Activated CD4-positive, alpha-beta T cell treated with anti-CD3 and anti-CD28 coated beads for 36 hours (primary cell): ENCODE measurements at regions of chr4 and their contacts with region 1.

Region 1: DNA sequence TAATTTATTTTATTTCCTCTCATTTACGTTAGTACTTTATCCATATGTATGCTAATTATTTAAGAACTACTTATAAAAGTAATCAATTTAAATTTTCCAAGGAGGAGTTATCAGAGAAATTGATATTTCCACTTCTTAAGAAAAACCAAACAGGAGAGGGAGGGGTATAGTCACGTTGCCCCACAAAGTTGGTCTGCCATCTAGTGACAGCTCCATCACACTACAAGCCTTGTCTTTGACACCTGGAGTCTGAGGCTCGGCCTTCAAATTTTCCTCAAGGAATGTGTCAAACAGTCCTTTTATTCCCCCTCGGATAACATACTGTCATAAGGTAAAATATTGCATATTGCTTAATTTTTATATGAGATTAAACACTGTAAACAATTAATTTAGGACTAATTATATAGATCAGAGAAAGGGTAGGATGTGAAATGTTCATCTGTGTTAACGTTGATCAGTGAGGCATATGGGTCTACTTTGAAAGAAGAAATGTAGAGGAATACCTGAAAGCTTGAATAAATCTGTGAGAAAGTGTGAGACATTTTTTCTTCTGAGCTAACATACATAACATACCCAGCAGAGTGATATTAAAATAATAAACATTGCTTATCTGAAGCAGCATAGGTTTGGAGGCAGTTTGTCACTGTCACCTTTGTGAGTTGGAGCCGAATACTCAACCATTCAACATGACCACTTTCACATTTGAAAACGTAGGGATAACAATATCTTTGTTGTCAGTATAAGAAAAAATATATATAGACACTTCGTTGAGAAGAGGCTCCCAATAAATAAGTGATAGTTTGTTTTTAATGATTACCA is 114.4 kb downstream of the GLRA3 start:
- DNase-seq: peak; percentile 38
- ATAC-seq: no peak
- H3K4me3 Mint-ChIP-seq: no peak overlapping the region
- H3K27ac Mint-ChIP-seq: no peak overlapping the region
- H3K4me1 Mint-ChIP-seq: no peaks in the 10 kb centered on the region
- H3K27me3 Mint-ChIP-seq: peaks cover 7% of the 10 kb centered on the region

Region 2: DNA sequence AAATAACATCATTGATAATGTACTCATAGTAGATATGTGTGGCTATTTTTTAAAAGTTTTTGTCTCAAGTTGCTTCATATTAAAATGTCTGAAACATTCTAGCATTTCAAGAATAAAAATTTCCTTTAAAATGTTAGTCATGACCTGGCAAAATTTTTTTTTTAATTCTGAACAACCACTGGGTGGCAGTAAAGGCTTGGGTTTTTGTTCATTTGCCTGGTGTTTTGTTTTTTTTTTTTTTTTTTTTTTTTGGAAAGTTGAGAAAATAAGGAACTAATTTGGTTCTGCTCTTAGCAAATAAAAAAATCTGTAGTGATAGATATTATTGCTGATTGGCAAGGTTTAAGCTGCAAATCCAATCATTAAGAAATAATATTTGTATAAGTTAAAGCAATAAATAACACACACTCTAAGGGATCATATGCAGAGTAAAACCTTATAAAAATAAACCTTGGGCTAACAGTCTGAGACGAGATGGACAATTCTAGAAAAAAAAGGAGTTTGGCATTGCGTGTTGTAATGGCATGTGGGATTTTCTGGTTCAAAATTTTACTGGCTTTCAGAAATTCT is 349.5 kb before region 1 on chr4:
- CTCF ChIA-PET with region 1: interaction called, 3 read pairs
- POLR2A ChIA-PET with region 1: no interaction called
- intact Hi-C with region 1: loop called (anchors 1 to 2 kb)
- DNase-seq: peak; percentile 11
- ATAC-seq: no peak
- H3K4me3 Mint-ChIP-seq: no peak overlapping the region
- H3K27ac Mint-ChIP-seq: no peak overlapping the region
- H3K4me1 Mint-ChIP-seq: no peaks in the 10 kb centered on the region
- H3K27me3 Mint-ChIP-seq: peaks cover 9% of the 10 kb centered on the region

Region 3: GRCh38 chr4:174749091-174749490 is 34.5 kb after region 1 on chr4:
- CTCF ChIA-PET with region 1: no interaction called
- POLR2A ChIA-PET with region 1: no interaction called
- intact Hi-C with region 1: no loop called
- DNase-seq: no peak
- ATAC-seq: no peak
- H3K4me3 Mint-ChIP-seq: no peak overlapping the region
- H3K27ac Mint-ChIP-seq: no peak overlapping the region
- H3K4me1 Mint-ChIP-seq: no peaks in the 10 kb centered on the region
- H3K27me3 Mint-ChIP-seq: no peaks in the 10 kb centered on the region